Mammary epithelial cell (primary cell): ENCODE measurements at regions of chr16 and their contacts with region 1.

Region 1: GRCh38 chr16:4616047-4616811 is 1.5 kb upstream of the UBALD1 start:
- DNase-seq: peak; percentile 99
- H3K4me3 ChIP-seq: peak overlapping the region; percentile 56 to 68 (median 59)
- H3K27ac ChIP-seq: peak overlapping the region; percentile 52
- H3K4me1 ChIP-seq: peaks cover 53% of the 10 kb centered on the region
- H3K27me3 ChIP-seq: no peaks in the 10 kb centered on the region
- CTCF ChIP-seq: peak in 1 of 2 donors; percentile 31

Region 2: GRCh38 chr16:4416200-4417032 is 199.8 kb before region 1 on chr16 and contains the start of gene CORO7:
- CTCF ChIA-PET with region 1: no interaction called
- dilution Hi-C with region 1: no loop called
- in situ Hi-C with region 1: no loop called
- intact Hi-C with region 1: loop called (anchors 2 kb)
- DNase-seq: peak; percentile 85
- H3K4me3 ChIP-seq: peak within 1 kb of the TSS; percentile 79 to 83 (median 80)
- H3K27ac ChIP-seq: peak within 1 kb of the TSS; percentile 49
- H3K4me1 ChIP-seq: peaks cover 12% of the 10 kb centered on the region
- H3K27me3 ChIP-seq: no peaks in the 10 kb centered on the region
- CTCF ChIP-seq: no peak
- total RNA-seq, gene CORO7: 10.7 to 26.0 TPM

Region 3: DNA sequence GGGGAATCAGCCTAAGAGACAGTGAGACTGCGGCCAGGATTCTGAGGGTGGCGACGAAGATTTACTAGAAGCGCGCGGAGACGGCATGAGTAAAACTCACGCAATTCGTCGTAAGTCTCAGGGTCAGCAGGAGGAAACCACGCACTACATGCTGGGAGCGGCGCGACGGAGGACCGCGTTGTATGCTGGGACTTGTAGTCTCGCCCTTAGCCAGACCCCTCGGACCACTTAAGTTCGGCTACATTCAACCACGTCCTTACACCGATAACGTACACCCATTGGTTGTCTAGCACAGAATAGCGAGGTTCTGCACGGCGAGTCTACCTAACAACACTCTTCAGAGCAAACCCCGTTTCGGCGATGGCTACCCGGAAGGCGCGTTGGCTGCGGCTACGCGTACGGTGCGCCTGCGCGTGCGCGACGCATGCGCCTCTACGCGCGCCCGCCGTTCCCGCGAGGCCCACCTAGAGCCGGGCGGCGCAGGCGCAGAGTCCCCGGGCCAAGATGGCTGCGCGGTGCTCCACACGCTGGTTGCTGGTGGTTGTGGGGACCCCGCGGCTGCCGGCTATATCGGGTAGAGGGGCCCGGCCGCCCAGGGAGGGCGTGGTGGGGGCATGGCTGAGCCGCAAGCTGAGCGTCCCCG is 190.7 kb before region 1 on chr16 and contains the start of gene DNAJA3:
- CTCF ChIA-PET with region 1: no interaction called
- dilution Hi-C with region 1: no loop called
- in situ Hi-C with region 1: no loop called
- intact Hi-C with region 1: loop called (anchors 1 kb)
- DNase-seq: peak; percentile 92
- H3K4me3 ChIP-seq: peak within 1 kb of the TSS; percentile 70 to 78 (median 75)
- H3K27ac ChIP-seq: peak within 1 kb of the TSS; percentile 91
- H3K4me1 ChIP-seq: peaks cover 13% of the 10 kb centered on the region
- H3K27me3 ChIP-seq: no peaks in the 10 kb centered on the region
- CTCF ChIP-seq: no peak
- total RNA-seq, gene DNAJA3: 52.7 to 70.4 TPM

Region 4: GRCh38 chr16:4538350-4539235 is 77.6 kb before region 1 on chr16 and contains the start of gene CDIP1:
- CTCF ChIA-PET with region 1: no interaction called
- dilution Hi-C with region 1: no loop called
- in situ Hi-C with region 1: no loop called
- intact Hi-C with region 1: loop called (anchors 10 kb)
- DNase-seq: peak; percentile 95
- H3K4me3 ChIP-seq: peak within 1 kb of the TSS; percentile 80 to 84 (median 82)
- H3K27ac ChIP-seq: peak within 1 kb of the TSS; percentile 37
- H3K4me1 ChIP-seq: peaks cover 14% of the 10 kb centered on the region
- H3K27me3 ChIP-seq: no peaks in the 10 kb centered on the region
- CTCF ChIP-seq: peak in 1 of 2 donors; percentile 31
- total RNA-seq, gene CDIP1: 63.3 to 81.8 TPM

Region 5: DNA sequence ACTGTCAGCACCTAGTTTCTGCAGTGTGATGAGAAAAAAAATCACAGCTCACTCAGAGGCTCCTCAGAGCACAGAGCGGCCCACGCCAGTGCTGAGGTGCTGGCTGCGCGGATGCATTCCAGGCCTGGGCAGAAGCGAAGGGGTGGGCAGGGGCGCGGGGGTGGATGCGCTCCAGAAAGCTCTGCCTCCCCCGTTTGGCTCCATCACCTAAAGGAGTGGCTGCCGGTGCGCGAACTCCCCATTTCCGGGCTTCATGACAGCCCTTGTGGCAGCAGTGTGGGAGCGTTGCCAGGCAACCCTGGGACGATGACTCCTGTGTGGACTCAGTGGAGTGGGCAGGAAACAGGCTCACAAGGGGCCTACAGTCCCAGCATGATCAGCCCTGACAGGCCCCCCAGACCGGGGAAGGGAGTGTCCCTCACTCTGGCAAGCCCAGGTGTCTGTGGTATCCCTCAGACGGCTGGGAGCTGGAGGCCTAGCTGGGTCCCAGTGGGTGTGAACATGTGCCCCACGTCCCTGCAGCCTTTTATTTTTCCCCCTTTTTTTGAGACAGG is 44.3 kb after region 1 on chr16:
- CTCF ChIA-PET with region 1: no interaction called
- dilution Hi-C with region 1: loop called (anchors 5 kb)
- in situ Hi-C with region 1: no loop called
- intact Hi-C with region 1: loop called (anchors 5 kb)
- DNase-seq: peak; percentile 70
- H3K4me3 ChIP-seq: no peak overlapping the region
- H3K27ac ChIP-seq: peak overlapping the region; percentile 44
- H3K4me1 ChIP-seq: peaks cover 51% of the 10 kb centered on the region
- H3K27me3 ChIP-seq: no peaks in the 10 kb centered on the region
- CTCF ChIP-seq: no peak

Region 6: GRCh38 chr16:4693296-4693955 is 77.2 kb after region 1 on chr16 and contains the start of gene NUDT16L1:
- CTCF ChIA-PET with region 1: no interaction called
- dilution Hi-C with region 1: no loop called
- in situ Hi-C with region 1: no loop called
- intact Hi-C with region 1: loop called (anchors 2 kb)
- DNase-seq: peak; percentile 96
- H3K4me3 ChIP-seq: peak within 1 kb of the TSS; percentile 77 to 95 (median 91)
- H3K27ac ChIP-seq: peak within 1 kb of the TSS; percentile 3
- H3K4me1 ChIP-seq: peaks cover 19% of the 10 kb centered on the region
- H3K27me3 ChIP-seq: no peaks in the 10 kb centered on the region
- CTCF ChIP-seq: peak in 1 of 2 donors; percentile 19
- total RNA-seq, gene NUDT16L1: 13.5 to 26.2 TPM

Region 7: GRCh38 chr16:4700380-4700996 is 84.3 kb after region 1 on chr16:
- CTCF ChIA-PET with region 1: no interaction called
- dilution Hi-C with region 1: loop called (anchors 5 kb)
- in situ Hi-C with region 1: no loop called
- intact Hi-C with region 1: no loop called
- DNase-seq: peak; percentile 73
- H3K4me3 ChIP-seq: no peak overlapping the region
- H3K27ac ChIP-seq: no peak overlapping the region
- H3K4me1 ChIP-seq: no peaks in the 10 kb centered on the region
- H3K27me3 ChIP-seq: no peaks in the 10 kb centered on the region
- CTCF ChIP-seq: no peak

Region 8: DNA sequence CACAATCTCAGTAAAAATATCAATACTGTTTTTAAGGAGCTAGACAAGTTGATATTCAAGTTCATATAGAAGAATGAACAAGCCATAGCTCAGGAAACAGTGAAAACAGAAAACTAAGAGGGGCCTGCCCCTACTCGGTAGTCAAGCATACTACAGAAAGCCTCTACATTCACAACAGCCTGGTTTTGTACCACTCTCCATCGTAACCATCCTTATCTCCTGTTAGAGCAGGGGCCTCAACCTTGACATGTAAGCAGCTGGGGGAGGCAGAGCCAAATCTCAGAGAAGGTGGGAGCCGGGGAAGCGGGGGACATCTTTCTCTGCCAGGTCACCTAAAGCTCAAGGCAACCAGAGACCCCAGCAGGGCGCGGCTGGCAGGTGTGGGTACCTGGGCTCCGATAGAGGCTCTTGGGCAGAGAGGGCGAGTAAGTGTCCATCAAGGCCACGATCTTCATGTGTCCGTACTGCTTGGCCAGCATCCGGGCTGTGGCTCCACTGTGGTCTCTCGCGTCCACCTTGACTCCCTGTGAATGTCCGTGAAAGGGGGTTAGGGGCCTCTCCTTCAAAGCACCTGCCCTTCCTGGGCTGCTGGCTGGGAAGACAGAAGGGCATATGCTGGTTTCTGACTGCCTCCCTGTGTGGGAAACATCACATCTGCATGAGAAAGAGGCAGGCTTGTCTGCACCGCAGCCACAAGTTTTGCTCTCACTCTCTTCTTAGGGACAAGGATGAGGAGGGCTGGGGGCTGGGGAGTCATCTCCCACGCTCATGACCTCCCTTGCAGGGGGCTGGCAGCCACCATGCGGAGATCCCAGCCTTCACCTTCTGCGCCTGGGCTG is 97.7 kb after region 1 on chr16:
- CTCF ChIA-PET with region 1: no interaction called
- dilution Hi-C with region 1: no loop called
- in situ Hi-C with region 1: no loop called
- intact Hi-C with region 1: no loop called
- DNase-seq: no peak
- H3K4me3 ChIP-seq: no peak overlapping the region
- H3K27ac ChIP-seq: no peak overlapping the region
- H3K4me1 ChIP-seq: no peaks in the 10 kb centered on the region
- H3K27me3 ChIP-seq: no peaks in the 10 kb centered on the region
- CTCF ChIP-seq: no peak

Region 9: GRCh38 chr16:4724661-4725270 is 108.5 kb after region 1 on chr16:
- CTCF ChIA-PET with region 1: no interaction called
- dilution Hi-C with region 1: no loop called
- in situ Hi-C with region 1: no loop called
- intact Hi-C with region 1: no loop called
- DNase-seq: no peak
- H3K4me3 ChIP-seq: no peak overlapping the region
- H3K27ac ChIP-seq: no peak overlapping the region
- H3K4me1 ChIP-seq: no peaks in the 10 kb centered on the region
- H3K27me3 ChIP-seq: no peaks in the 10 kb centered on the region
- CTCF ChIP-seq: no peak